ENCODE measurements at regions of chr16 and their contacts with region 1.

Region 1: DNA sequence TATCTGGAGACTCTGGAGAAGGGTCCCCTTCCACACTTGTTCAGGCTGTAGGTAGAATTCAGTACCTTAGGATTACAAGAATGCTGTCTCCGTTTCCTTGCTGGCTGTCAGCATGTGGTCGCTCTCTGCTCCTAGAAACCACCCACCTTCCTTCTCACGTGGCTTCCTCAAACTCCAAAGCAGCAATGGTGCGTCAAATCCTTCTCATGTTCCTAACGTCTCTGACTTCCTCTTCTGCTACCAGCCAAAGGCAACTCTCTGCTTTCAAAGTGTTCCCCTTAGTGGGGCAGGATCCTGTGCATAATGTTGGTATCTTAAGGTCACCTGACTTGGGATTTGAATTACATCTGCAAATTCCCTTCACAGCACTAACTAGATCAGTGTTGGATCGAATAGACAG is 30.9 kb upstream of the DYNLRB2 start:
- DNase-seq: no peak
- ATAC-seq: no peak
- H3K4me3 ChIP-seq: no peak overlapping the region
- H3K27ac ChIP-seq: no peak overlapping the region
- H3K4me1 ChIP-seq: no peaks in the 10 kb centered on the region
- H3K27me3 ChIP-seq: no peaks in the 10 kb centered on the region; the same call in 1 of the 2 replicates
- CTCF ChIP-seq: no peak

Region 2: DNA sequence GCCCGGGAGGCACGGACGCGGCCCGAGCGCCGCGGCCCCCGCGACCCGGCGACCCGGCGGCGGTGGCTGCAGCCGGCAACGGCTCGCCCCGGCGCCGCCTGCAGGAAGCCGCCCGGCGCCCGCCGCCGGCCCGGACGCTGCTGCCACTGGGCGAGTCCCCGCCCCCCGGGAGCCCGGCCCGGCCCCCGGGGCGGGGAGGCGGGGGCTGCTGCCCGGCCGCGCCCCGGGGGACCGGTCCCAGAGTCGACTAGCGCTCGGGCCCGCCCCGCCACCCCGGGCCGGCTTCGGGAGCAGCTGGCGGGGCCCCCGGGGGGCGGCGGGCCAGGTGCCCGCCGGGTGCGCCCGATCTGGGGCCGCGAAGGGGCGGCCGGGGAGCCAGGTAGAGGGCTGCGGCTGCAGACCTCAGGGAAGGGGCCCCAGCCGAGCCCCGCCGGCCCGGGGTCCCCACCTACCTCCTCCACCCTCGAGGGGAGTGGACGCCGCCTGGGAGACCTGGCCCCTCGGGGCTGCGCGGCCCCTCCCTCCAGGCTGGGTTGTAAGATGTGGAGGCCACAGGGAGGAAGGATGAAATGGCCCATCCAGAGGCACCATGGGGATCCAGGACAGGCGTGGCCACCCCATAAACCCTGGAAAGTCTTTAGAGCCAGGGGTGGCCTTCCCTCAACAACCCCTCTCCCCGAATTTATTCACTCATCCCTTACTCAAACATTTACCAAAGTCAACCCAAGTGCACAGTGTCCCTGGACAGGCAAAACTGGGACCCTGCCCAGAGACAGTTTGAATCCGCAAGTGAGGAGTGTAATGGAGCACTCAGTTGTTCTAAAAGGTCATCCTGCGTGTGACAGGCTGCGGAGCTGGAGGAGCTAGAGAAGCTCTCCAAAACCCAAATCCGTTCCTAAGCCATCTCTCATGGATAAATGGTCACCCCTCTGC is 294.8 kb after region 1 on chr16 and contains the start of gene CDYL2:
- CTCF ChIA-PET with region 1: no interaction called
- POLR2A ChIA-PET with region 1: no interaction called
- in situ Hi-C with region 1: no loop called
- intact Hi-C with region 1: loop called (anchors 5 kb)
- DNase-seq: no peak
- ATAC-seq: peak; percentile 80
- H3K4me3 ChIP-seq: peak within 1 kb of the TSS; percentile 38 to 42; a peak in 3 of 4 replicates
- H3K27ac ChIP-seq: no peak within 1 kb of the TSS
- H3K4me1 ChIP-seq: no peaks in the 10 kb centered on the region
- H3K27me3 ChIP-seq: peaks cover 13% of the 10 kb centered on the region
- CTCF ChIP-seq: no peak
- total RNA-seq, gene CDYL2: 6.1 TPM